ENCODE measurements at regions of chr14 and their contacts with region 1.

Region 1: GRCh38 chr14:51989293-51990234 is at the start of gene RTRAF:
- DNase-seq: peak; percentile 93 to 94
- H3K4me3 ChIP-seq: peak within 1 kb of the TSS; percentile 56 to 100 (median 96)
- H3K27ac ChIP-seq: peak within 1 kb of the TSS; percentile 48 to 88 (median 71)
- H3K4me1 ChIP-seq: peaks cover 4 to 14% of the 10 kb centered on the region in 2 donors
- H3K27me3 ChIP-seq: no peaks in the 10 kb centered on the region
- CTCF ChIP-seq: no peak
- POLR2A ChIP-seq: peak in 1 of 2 donors; percentile 90
- total RNA-seq, gene RTRAF: 42.9 to 84.2 (median 51.6) TPM

Region 2: GRCh38 chr14:52043690-52044089 is 54.1 kb after region 1 on chr14:
- intact Hi-C with region 1: loop called (anchors 10 kb)
- DNase-seq: peak; percentile 56 to 57
- H3K4me3 ChIP-seq: no peak overlapping the region
- H3K27ac ChIP-seq: peak overlapping the region in 2 of 3 donors; percentile 10 to 63
- H3K4me1 ChIP-seq: peaks cover 42 to 60% of the 10 kb centered on the region in 2 donors
- H3K27me3 ChIP-seq: no peaks in the 10 kb centered on the region
- CTCF ChIP-seq: peak; percentile 16 to 56 (median 46)
- POLR2A ChIP-seq: no peak

Region 3: GRCh38 chr14:52086711-52087110 is 97.1 kb after region 1 on chr14:
- intact Hi-C with region 1: no loop called
- DNase-seq: no peak
- H3K4me3 ChIP-seq: no peak overlapping the region
- H3K27ac ChIP-seq: peak overlapping the region; percentile 75 to 78 (median 76)
- H3K4me1 ChIP-seq: peaks cover 33 to 37% of the 10 kb centered on the region in 2 donors
- H3K27me3 ChIP-seq: no peaks in the 10 kb centered on the region
- CTCF ChIP-seq: no peak
- POLR2A ChIP-seq: no peak

Region 4: GRCh38 chr14:52473557-52473956 is 484.0 kb after region 1 on chr14:
- intact Hi-C with region 1: no loop called
- DNase-seq: no peak
- H3K4me3 ChIP-seq: no peak overlapping the region
- H3K27ac ChIP-seq: no peak overlapping the region
- H3K4me1 ChIP-seq: no peaks in the 10 kb centered on the region
- H3K27me3 ChIP-seq: no peaks in the 10 kb centered on the region
- CTCF ChIP-seq: peak in 3 of 6 experiments; percentile 28 to 33 (median 31)
- POLR2A ChIP-seq: no peak